Heart right ventricle (tissue), 16 donors: ENCODE measurements at regions of chr9 and their contacts with region 1.

Region 1: DNA sequence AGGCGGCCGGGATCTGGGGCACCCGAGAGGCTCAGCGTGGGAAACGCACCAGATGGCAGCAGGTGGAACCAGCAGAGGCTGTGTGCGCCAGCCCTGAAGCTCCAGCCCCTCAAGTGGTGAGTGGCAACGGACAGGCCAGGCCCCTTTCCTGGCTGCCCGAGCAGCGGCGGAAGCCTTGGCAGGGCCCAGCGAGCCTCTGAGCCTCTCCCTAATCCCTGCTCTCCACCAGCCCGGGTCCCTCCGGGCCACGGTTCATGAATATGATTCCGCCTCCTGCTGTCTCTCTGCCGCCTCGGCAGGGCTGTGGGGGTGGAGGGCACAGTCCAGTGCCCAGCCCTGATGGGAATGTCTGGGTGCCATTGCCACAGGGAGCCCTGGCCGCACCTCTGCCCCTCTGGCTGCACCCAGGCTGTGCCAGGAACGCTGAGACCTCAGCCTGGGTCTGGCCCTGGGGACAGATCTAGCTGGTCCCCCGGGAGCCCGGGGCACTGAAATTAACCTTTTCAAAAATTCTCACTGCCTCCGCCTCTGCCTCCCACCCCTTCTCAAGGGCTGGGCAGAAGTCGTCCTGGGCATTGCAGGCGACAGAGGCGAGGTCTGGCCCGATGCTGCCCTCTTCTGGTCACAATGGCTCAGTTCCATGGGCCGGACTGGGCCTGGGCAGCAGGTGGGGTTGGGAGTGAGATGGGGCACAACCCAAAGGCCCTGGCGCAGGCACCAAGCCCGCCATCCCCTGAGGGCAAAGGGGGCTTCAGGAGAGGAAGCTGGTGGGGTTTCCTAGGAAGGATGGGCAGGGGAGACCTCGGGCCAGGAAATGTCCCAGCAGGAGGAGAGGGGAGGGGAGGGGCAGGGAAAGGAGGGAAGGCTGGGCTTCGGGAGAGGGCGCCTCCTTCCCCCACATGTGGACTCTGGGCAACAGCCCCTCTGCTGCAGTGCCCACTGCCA is 20.3 kb downstream of the CCDC187 start:
- DNase-seq: peak; percentile 71 to 78
- ATAC-seq: peak; percentile 93 to 98 (median 94)
- H3K4me3 ChIP-seq: peak overlapping the region in 9 of 10 donors; percentile 16 to 45 (median 30)
- H3K27ac ChIP-seq: peak overlapping the region in 9 of 10 donors; percentile 10 to 75 (median 53)
- H3K4me1 ChIP-seq: peaks cover 0 to 13% (median 6%) of the 10 kb centered on the region in 9 donors
- H3K27me3 ChIP-seq: peaks cover 0 to 59% (median 43%) of the 10 kb centered on the region in 7 donors
- CTCF ChIP-seq: peak; percentile 81 to 89 (median 87)

Region 2: DNA sequence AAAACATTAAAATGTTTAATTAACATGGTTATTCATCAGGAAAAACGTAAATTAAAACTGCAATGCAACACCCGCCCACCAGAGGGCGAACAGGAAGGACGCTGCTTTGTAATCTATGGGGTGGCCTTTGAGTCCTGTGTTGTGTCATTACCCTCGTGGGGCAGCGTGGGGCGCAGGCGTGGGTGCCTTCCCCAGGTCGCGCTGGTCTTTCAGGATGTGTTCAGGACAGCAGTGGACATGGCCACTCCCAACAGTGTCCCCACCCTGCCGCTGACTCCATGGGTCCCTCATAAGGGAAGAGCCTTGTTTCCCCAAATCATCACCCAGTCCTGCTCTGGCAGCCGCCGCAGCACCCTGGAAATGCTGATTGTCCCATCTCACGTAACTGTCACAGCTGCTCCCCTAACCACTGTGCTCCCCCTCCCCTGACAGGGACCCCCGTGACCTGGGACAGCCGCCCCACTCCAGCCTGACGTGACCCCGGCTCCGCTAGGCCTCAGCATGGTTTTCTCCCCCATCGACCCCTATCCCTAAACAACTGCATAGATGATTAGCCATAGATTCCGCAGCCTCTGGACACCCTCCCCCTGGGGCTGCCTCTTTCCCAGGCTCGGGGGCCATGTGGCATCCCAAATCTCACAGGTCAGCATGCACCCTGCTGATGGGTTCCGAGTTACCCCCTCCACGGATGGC is 680.6 kb before region 1 on chr9:
- intact Hi-C with region 1: loop called in 2 of 10 experiments (anchors 10 kb)
- DNase-seq: no peak
- ATAC-seq: peak in 3 of 8 donors; percentile 34 to 42 (median 35)
- H3K4me3 ChIP-seq: no peak overlapping the region
- H3K27ac ChIP-seq: no peak overlapping the region
- H3K4me1 ChIP-seq: no peaks in the 10 kb centered on the region
- H3K27me3 ChIP-seq: peaks cover 0 to 28% (median 11%) of the 10 kb centered on the region in 7 donors
- CTCF ChIP-seq: peak; percentile 66 to 80 (median 75)

Region 3: DNA sequence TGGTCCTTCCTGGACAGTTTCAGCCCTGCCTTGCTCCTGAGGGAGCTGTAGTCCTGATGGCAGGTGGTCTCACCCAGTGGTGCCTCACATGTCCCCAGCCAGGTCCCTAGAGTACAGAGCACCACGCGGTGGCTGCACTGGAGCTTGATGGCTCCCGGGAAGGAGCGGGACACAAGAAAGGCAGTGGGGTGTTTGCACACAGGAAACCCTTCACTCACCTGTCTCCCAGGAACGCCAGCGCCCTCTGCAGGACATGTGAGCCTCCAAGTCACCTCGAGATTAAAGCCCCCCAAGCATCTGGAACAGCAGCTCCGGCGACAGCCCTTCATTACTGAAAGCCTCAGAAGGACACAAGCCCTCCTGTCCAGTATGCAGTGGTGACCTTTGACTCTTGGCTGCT is 145.0 kb before region 1 on chr9:
- intact Hi-C with region 1: loop called in 3 of 10 experiments (anchors 5 to 10 kb)
- DNase-seq: no peak
- ATAC-seq: no peak
- H3K4me3 ChIP-seq: no peak overlapping the region
- H3K27ac ChIP-seq: no peak overlapping the region
- H3K4me1 ChIP-seq: peaks cover 2 to 20% (median 7%) of the 10 kb centered on the region in 9 donors
- H3K27me3 ChIP-seq: peaks cover 5 to 70% (median 46%) of the 10 kb centered on the region in 7 donors
- CTCF ChIP-seq: peak in 5 of 9 donors; percentile 21 to 32 (median 26)

Region 4: GRCh38 chr9:136170006-136170901 is 113.3 kb before region 1 on chr9:
- intact Hi-C with region 1: loop called (anchors 1 to 10 kb)
- DNase-seq: peak in 1 of 2 donors; percentile 34
- ATAC-seq: peak in 7 of 8 donors; percentile 25 to 79 (median 71)
- H3K4me3 ChIP-seq: no peak overlapping the region
- H3K27ac ChIP-seq: no peak overlapping the region
- H3K4me1 ChIP-seq: no peaks in the 10 kb centered on the region
- H3K27me3 ChIP-seq: peaks cover 0 to 44% (median 29%) of the 10 kb centered on the region in 7 donors
- CTCF ChIP-seq: peak; percentile 50 to 80 (median 68)